Activated CD4-positive, alpha-beta T cell treated with anti-CD3 and anti-CD28 coated beads, Interleukin-2, amount 10 ng/mL, durations not matched to agents 24 days and 14 days (primary cell): ENCODE measurements at regions of chr17 and their contacts with region 1.

Region 1: DNA sequence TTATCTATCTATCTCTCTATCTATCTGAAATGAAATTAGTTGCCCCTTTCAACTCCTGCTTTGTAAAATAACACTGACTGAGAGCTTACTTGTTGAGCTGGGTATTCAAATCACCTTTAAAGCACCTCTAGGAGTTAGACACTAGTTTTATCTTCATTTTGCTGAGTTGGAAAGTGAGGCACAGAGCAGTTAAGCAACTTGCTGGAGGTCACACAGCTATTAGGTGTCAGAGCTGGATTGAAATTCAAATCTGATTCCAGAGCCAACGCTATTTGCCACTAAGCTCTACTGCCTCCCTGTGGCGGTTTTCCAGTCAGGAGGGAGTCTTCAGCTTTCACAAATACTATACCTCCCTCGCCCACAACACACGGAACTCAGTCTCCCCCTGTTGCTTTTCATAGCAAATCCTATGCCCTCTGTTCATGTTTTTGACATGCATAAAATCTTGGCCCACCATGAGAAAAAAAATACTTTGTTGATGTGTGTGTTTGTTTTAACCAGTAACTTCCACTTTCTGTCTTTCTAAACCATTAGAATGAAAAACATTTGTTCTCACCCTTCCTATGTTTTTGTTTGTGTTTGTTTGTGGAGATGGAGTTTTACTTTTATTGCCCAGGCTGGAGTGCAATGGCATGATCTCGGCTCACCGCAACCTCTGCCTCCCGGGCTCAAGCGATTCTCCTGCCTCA is 74.8 kb upstream of the SMURF2 start:
- DNase-seq: peak; percentile 86
- H3K4me3 Mint-ChIP-seq: no peak overlapping the region
- H3K27ac Mint-ChIP-seq: peak overlapping the region; percentile 14
- H3K4me1 Mint-ChIP-seq: peaks cover 11% of the 10 kb centered on the region
- H3K27me3 Mint-ChIP-seq: no peaks in the 10 kb centered on the region

Region 2: DNA sequence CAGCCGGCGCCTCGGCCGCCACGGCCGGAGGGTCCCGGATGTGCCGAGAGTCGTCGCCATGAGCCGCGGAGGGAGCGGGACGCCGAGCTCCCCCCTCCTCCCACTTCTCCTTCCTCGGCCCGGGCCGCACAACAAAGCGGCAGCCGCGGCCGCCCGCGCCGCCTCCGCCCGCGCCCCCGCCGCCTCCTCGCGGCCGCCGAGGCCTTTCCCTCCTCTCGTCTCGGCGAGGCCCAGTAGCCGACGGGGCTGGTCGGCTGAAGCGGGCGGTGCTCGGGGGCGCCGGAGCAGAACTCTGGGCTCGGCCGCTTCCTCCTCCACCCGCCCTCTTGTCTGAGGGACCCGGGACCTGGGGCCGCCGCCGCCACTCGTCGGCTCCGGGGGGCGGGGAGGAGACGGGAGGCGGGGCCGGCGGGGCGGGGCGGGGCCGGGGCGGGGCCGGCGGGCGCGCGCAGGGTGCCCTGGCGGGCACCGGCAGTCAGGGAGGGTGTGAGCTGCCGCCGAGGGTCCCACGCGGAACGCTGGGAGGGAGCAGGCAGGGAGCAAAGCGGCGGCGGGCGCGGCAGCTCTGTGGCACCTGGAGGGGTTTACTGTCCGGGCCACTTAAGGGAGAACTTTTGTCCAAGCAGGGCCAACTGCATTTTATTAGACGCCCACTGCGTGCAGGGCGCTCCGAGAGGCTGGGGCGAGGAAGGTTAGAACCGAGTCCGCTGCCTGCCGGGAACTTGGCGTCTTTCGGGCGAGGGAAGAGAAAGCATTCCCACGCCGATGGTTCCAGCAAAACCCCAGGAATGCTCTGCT is 74.8 kb before region 1 on chr17 and contains the start of gene SMURF2:
- intact Hi-C with region 1: loop called (anchors 5 kb)
- DNase-seq: peak; percentile 94
- H3K4me3 Mint-ChIP-seq: peak within 1 kb of the TSS; percentile 96
- H3K27ac Mint-ChIP-seq: peak within 1 kb of the TSS; percentile 95
- H3K4me1 Mint-ChIP-seq: peaks cover 26% of the 10 kb centered on the region
- H3K27me3 Mint-ChIP-seq: no peaks in the 10 kb centered on the region
- total RNA-seq, gene SMURF2: 10.3 and 11.3 TPM in 2 replicates

Region 3: DNA sequence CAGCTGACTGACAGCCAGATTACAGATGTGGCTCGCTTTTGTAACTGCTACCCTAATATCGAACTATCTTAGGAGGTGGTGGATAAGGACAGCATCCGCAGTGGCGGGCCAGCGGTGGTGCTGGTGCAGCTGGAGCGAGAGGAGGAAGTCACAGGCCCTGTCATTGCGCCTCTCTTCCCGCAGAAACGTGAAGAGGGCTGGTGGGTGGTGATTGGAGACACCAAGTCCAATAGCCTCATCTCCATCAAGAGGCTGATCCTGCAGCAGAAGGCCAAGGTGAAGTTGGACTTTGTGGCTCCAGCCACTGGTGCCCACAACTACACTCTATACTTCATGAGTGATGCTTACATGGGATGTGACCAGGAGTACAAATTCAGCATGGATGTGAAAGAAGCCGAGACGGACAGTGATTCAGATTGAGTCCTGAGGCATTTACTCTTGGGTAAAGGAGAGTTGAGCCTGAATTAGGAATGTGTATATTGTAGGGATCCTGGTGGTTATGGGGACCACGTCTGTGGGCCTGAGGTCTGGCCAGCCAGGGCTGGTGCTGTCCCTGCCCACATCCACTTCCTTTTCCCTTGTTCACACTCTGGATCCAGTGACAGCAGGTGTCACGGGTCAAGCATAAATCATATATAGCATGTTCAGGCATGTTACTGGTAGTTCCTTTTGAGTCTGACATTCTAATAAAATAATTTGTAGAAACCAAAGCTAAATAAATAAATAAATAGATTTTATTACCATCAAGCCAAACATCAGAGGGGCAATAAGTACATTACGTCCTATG is 14.1 kb after region 1 on chr17:
- intact Hi-C with region 1: no loop called
- DNase-seq: no peak
- H3K4me3 Mint-ChIP-seq: no peak overlapping the region
- H3K27ac Mint-ChIP-seq: no peak overlapping the region
- H3K4me1 Mint-ChIP-seq: peaks cover 7% of the 10 kb centered on the region
- H3K27me3 Mint-ChIP-seq: no peaks in the 10 kb centered on the region